Head of caudate nucleus (tissue), 42 donors: ENCODE measurements at regions of chr11 and their contacts with region 1.

Region 1: DNA sequence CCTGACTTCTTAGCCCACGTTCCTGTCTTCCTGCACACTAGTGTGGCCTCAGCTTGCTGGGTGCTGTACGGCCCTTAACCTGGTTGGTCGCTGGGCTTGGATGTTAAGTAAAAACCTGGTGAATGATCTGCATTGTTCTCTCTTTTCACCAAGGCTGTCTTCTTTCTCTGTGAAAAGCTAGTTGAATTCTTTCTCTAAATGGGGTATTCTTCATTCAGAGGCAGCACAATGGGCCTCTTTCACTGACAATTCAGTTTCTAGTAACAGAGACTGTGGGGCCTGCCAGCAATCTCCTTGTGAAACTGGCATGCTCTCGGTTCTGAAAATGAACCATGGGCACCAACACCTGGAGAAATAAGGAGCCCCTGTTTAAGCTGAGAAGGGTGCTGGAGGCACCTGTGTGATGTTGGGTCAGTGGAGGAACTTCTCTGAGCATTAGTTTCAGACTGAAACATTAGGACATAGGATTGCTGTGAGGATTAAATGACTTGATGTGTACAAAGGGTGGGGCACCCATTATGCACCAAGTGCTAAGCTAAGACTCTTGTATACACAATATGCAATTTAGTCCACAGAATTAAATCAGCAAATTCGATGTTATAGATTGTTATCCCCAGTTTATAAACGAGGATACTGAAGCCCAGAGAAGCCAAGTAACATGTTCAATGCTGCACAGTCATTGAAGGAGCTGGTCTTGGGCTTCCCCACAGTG is 33.1 kb upstream of the ELF5 start:
- DNase-seq: peak in 41 of 42 donors; percentile 11 to 88 (median 66)

Region 2: DNA sequence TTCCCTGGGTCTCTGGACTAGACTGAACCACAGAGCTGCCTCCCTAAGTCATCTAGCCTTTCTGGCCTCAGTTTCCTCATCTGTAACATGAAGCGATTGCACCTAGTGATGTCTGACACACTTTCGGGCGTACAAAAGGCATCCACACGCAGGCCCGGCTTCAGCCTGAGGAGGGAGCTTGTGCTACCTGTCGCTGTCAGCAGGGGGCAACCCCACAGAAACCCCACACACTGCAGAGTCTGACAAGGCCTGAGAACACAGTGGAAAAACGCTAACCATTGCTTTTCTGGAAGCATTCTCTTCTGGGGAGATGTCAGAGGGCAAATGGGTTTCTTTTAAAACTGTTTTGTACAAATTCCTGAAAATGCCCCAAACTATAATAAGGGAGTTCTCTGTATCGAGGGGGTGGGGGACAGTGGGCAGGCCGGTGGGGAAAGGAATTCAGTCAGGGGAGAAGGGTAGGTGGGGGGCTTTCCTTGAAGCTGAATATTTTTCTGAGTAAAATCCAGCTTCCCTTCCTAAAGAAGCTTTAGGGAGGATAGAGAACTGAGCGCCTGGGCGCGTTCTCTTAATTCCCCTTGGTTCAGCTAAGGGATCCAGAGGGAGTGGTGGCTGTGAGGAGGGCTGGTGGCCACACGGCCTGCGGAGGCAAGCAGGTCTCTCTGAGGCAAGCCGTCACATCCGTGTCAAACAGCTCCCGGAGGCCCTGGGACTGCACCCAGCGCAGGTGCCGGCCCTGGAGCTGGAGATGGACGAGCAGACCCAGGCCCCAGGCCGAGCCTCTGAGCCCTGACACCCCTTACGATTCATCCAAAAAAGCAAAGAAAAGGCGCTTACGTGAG is 33.6 kb before region 1 on chr11:
- intact Hi-C with region 1: loop called (anchors 5 kb)
- DNase-seq: peak in 41 of 42 donors; percentile 34 to 85 (median 66)

Region 3: GRCh38 chr11:34671946-34672345 is 125.3 kb after region 1 on chr11:
- intact Hi-C with region 1: no loop called
- DNase-seq: no peak